Heart right ventricle (tissue), 16 donors: ENCODE measurements at regions of chr9 and their contacts with region 1.

Region 1: DNA sequence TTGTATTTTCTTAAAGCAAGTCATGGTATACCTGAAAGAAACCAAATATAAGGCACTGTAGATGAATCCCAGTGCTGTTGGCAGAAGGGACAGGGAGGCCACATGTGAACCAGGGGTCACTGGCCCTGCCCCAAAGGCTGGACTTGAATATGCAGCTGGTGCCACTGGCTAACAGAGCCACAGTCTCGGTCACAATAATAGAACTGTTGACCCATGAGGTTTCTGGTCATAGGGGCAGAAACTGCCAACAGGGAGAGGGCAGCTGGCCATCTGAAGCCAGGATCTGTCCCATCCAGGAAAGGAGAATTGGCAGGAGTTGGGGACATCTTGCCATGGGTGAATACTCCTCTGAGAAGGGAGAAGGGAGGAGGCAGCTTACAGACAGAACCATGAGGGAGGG is 31.9 kb downstream of the PALM2AKAP2 start:
- DNase-seq: no peak
- ATAC-seq: no peak
- H3K4me3 ChIP-seq: no peak overlapping the region
- H3K27ac ChIP-seq: no peak overlapping the region
- H3K4me1 ChIP-seq: peaks cover 0 to 40% (median 19%) of the 10 kb centered on the region in 9 donors
- H3K27me3 ChIP-seq: no peaks in the 10 kb centered on the region
- CTCF ChIP-seq: no peak

Region 2: GRCh38 chr9:109756302-109756701 is 55.6 kb before region 1 on chr9:
- intact Hi-C with region 1: loop called in 1 of 10 experiments (anchors 2 kb)
- DNase-seq: no peak
- ATAC-seq: no peak
- H3K4me3 ChIP-seq: no peak overlapping the region
- H3K27ac ChIP-seq: no peak overlapping the region
- H3K4me1 ChIP-seq: no peaks in the 10 kb centered on the region
- H3K27me3 ChIP-seq: no peaks in the 10 kb centered on the region
- CTCF ChIP-seq: no peak